ENCODE measurements at regions of chr1 and their contacts with region 1.

Region 1: DNA sequence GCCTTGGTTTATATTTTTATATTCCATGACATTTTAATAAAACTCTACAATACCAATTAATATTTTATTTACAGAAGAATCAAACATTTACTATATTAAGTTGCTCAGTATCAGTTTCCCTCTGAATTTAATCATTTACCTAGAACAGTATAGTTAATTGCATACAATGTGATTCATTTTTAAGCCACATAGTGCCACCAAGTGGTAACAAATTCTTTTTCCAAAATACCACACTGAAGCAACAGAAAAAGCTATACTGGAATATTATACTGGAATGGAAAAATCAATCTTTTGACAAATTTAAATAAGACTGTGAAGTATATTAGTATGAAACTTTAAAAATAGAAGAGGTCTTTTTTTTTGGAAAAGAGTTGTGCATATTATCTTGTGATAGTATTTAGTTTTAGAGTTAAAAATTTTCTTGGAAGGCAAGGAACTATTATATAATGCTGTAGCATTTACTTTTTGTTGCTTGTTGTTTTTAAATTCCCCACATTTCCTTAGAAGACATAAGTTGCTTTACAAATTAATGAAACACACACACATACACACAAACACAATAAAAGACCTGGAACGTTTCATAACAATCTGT is 57.3 kb downstream of the ZNF644 start:
- DNase-seq: no peak
- H3K4me3 ChIP-seq: no peak overlapping the region
- H3K27ac ChIP-seq: no peak overlapping the region
- H3K4me1 ChIP-seq: no peaks in the 10 kb centered on the region
- H3K27me3 ChIP-seq: no peaks in the 10 kb centered on the region
- CTCF ChIP-seq: no peak

Region 2: DNA sequence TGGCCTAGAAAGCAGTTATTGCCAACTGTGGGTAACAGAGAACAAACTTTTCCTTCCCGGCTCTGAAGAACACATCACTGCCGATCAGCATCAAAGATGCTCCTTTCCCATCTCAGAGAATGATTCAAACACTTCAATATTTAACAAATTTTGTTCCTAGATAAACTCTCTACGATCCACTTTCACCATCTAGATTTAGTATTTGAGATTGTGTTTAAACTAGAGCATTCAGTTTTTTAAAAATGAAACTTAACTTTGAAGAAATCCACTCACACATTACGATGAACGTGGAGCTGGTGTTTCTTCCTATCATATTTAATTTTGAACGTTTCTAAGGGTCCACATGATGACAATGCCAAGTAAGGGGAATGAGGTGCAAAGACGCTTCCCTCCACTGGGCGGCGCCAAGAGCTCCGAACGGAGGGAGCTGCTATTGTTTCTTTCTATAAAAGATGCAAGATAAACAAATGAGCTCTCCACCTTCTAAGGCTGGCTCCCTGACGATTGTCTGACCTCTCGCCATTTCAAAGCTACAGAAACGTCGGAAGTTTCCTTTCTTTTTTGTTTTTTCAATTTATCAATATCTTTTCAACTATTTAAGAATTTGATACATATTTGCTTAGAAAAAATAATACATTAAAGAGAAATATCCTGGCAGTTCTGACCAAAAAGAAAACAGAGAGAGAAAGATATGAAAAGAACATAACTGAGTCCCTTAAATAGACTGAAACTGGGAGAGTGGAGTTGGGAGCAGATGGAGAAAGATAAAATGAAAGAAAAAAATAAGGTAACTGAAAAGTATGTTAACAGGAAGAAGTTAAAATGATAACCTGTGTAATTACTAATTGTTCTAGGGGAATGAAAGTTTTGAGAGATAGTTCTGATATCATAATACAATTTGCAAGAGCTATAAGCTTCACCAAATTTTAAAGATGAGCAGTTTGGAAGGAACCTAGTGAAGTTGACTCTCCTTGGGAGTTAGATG is 243.0 kb before region 1 on chr1:
- intact Hi-C with region 1: loop called (anchors 10 kb)
- DNase-seq: peak; percentile 62
- H3K4me3 ChIP-seq: no peak overlapping the region
- H3K27ac ChIP-seq: no peak overlapping the region
- H3K4me1 ChIP-seq: peaks cover 5% of the 10 kb centered on the region
- H3K27me3 ChIP-seq: peaks cover 92% of the 10 kb centered on the region
- CTCF ChIP-seq: peak; percentile 67

Region 3: DNA sequence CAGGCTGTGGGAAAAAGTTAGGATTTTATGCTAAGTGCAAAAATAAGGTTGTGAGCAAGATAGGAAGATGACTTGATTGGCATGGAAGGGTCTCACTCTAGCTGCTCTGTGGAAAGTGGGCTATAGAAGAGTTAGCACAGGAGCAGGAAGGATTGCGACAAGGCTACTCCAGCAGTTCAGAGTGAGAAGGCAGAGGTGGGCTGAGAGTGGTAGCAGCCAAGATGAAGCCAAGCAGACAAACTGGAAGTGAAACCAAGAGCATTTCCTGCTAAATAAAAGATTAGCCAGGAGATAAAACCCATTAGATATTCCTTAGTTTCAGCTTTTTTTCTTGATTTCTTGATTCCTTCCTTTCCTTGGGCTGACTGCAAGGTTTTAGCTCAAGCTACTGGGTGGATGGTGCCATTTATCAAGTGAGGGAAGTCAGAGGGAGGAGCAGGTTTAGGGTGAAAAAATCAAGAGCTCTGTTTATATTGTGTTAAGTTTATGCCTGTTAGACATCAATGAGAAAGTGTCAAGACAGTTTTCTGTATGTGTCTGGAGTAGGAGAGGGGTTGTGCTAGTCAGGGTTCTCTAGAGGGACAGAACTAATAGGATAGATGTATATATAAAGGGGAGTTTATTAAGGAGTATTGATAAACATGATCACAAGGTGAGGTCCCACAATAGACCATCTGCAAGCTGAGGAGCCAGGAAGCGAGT is 90.4 kb after region 1 on chr1:
- intact Hi-C with region 1: no loop called
- DNase-seq: no peak
- H3K4me3 ChIP-seq: no peak overlapping the region
- H3K27ac ChIP-seq: no peak overlapping the region
- H3K4me1 ChIP-seq: no peaks in the 10 kb centered on the region
- H3K27me3 ChIP-seq: no peaks in the 10 kb centered on the region
- CTCF ChIP-seq: no peak

Measured in colonic mucosa (tissue), 4 donors.